Motor neuron (in vitro differentiated cells): ENCODE measurements at regions of chr3 and their contacts with region 1.

Region 1: DNA sequence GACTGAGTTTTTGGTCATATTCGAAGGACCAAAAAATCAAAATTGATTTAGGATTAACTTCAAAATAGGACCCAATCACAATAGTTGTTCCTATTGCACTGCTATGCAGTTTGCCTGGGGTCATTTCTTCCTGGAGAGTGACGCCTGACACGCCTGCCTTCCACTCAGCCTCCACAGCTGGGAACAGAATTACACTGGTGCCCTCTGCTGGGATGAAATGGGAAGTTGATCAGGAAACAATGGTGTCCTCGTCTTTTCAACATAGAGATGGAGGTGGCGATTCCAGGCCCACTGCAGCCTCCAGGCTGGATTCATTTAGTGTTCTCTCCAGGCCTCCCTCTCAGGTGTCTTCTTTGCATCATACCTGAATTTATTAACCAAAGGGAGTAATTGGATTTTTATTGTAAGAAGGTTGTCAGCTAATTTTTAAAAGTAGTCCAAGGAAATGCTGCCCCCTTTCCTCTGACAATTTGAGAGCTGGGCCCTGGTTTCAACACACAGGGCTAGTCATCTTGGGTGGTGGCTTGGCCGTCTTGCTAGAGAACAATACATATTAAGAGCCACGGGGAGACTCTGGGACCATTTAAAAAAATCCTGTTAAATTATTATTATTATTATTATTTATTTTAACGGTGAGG is 69.7 kb downstream of the GAP43 start:
- ATAC-seq: peak; percentile 77 to 100 (median 82)
- H3K4me3 ChIP-seq: no peak overlapping the region
- H3K27ac ChIP-seq: peak overlapping the region in 1 of 2 donors; percentile 72
- H3K4me1 ChIP-seq: peaks cover 25 to 39% of the 10 kb centered on the region in 2 donors

Region 2: DNA sequence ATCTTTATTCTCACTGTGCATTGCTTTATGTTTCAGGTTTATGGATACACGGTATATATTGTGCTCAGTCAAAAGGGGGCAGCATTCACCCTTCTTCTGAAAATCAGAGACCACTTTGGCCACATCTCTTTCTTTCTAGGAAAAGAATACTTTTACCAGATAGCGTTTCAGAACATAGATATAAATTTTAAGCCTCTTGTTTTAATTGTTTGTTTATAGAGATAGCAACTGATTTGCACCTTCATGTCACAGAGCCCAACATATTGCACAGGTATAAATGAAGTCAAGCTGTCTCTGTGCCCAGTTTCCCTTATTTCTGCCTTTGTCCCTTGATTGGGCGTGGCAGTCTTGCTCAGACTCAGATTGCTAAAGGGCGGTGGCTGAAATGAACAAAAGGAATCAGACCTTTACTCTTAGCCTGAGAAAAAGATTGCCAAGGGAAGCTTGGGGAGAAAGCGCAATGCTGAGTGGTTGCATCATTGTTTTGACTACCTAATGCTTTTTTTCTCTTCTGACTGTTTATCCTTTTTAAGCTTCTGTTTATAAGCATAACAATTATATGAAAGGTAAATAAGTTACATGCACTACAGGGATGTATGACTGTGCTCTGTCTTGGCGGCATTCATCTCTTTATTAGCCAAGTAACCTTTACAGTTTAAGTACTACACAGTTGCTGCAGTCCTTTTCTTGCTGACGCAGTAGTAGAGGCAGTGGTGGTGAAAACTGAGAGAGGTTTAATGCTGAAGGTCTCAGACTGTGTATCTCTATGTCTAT is 475.1 kb before region 1 on chr3:
- in situ Hi-C with region 1: loop called in 5 of 9 experiments (anchors 10 to 25 kb)
- ATAC-seq: peak; percentile 84 to 95 (median 89)
- H3K4me3 ChIP-seq: no peak overlapping the region
- H3K27ac ChIP-seq: peak overlapping the region in 1 of 2 donors; percentile 6
- H3K4me1 ChIP-seq: peaks cover 17 to 20% of the 10 kb centered on the region in 2 donors

Region 3: GRCh38 chr3:115226844-115227445 is 466.1 kb before region 1 on chr3:
- in situ Hi-C with region 1: loop called in 4 of 9 experiments (anchors 10 to 25 kb)
- ATAC-seq: peak in 2 of 8 experiments; percentile 79 to 93
- H3K4me3 ChIP-seq: no peak overlapping the region
- H3K27ac ChIP-seq: no peak overlapping the region
- H3K4me1 ChIP-seq: peaks cover 0 to 4% of the 10 kb centered on the region in 2 donors

Region 4: GRCh38 chr3:115401298-115401697 is 291.7 kb before region 1 on chr3:
- in situ Hi-C with region 1: no loop called
- ATAC-seq: no peak
- H3K4me3 ChIP-seq: no peak overlapping the region
- H3K27ac ChIP-seq: no peak overlapping the region
- H3K4me1 ChIP-seq: peaks cover 46 to 48% of the 10 kb centered on the region in 2 donors